ENCODE measurements at regions of chr18 and their contacts with region 1.

Region 1: DNA sequence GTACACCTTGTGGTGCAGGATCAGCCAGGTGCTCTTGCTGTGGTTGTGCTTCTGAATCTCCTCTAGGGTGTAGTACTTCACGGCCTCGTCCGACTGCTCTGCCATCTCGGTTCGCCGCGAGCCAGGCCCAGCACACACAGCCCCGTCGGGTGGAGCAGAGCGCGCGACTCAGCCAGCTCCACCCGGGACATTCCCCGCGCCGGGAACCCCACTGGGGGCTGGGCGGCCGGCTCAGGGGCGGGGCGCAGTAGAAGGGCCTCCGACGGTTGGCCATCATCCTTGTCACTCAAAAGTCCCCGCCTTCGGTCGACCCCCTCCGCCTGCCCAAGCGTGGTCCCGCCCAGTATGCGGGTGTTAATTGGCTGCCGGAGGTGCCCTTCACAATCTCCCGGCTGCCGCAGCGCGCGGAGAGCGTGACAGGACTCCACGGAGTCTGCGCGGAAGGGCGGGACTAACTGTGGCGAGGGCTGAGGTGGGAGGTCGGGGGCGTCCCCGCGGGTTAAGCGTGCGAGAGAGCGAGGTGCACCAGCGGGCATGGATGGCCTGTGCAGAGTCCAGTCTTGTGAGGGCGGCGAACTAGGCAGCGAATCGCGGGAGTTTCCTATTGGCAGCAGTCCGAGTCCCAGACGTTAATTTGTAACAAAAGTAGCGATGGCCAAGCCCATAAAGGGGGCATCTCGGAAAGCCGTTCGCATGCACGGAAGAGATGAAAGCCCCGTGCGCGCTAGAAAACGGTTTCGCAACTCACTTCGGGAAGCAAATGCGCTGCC is at the start of gene CYB5A:
- DNase-seq: peak; percentile 98
- ATAC-seq: peak; percentile 99
- H3K4me3 Mint-ChIP-seq: peak within 1 kb of the TSS; percentile 86
- H3K27ac Mint-ChIP-seq: peak within 1 kb of the TSS; percentile 83
- H3K4me1 Mint-ChIP-seq: peaks cover 6% of the 10 kb centered on the region
- H3K27me3 Mint-ChIP-seq: no peaks in the 10 kb centered on the region
- total RNA-seq, gene CYB5A: 53.1 to 61.4 TPM

Region 2: GRCh38 chr18:74204526-74205152 is 87.3 kb before region 1 on chr18:
- CTCF ChIA-PET with region 1: no interaction called
- POLR2A ChIA-PET with region 1: no interaction called
- intact Hi-C with region 1: loop called in 1 of 2 experiments (anchors 2 kb)
- DNase-seq: peak; percentile 48
- ATAC-seq: no peak
- H3K4me3 Mint-ChIP-seq: no peak overlapping the region
- H3K27ac Mint-ChIP-seq: no peak overlapping the region
- H3K4me1 Mint-ChIP-seq: no peaks in the 10 kb centered on the region
- H3K27me3 Mint-ChIP-seq: no peaks in the 10 kb centered on the region

Region 3: GRCh38 chr18:74331404-74331803 is 39.4 kb after region 1 on chr18:
- CTCF ChIA-PET with region 1: no interaction called
- POLR2A ChIA-PET with region 1: no interaction called
- intact Hi-C with region 1: no loop called
- DNase-seq: no peak
- ATAC-seq: peak; percentile 36
- H3K4me3 Mint-ChIP-seq: no peak overlapping the region
- H3K27ac Mint-ChIP-seq: no peak overlapping the region
- H3K4me1 Mint-ChIP-seq: no peaks in the 10 kb centered on the region
- H3K27me3 Mint-ChIP-seq: peaks cover 4% of the 10 kb centered on the region

Measured in activated CD4-positive, alpha-beta T cell treated with anti-CD3 and anti-CD28 coated beads for 36 hours (primary cell).